ENCODE measurements at regions of chr22 and their contacts with region 1.

Region 1: GRCh38 chr22:30289134-30289979 is at the start of gene CASTOR1:
- DNase-seq: peak; percentile 81 to 90
- ATAC-seq: peak; percentile 80 to 83 (median 81)
- H3K4me3 ChIP-seq: peak within 1 kb of the TSS; percentile 68
- H3K4me3 Mint-ChIP-seq: peak within 1 kb of the TSS; percentile 92
- H3K27ac ChIP-seq: peak within 1 kb of the TSS; percentile 66
- H3K27ac Mint-ChIP-seq: peak within 1 kb of the TSS; percentile 86 to 88
- H3K4me1 ChIP-seq: peaks cover 43% of the 10 kb centered on the region
- H3K4me1 Mint-ChIP-seq: peaks cover 19 to 39% of the 10 kb centered on the region in 2 donors
- H3K27me3 ChIP-seq: no peaks in the 10 kb centered on the region
- H3K27me3 Mint-ChIP-seq: no peaks in the 10 kb centered on the region
- CTCF ChIP-seq: no peak
- total RNA-seq, gene CASTOR1: 7.0 to 11.9 (median 8.8) TPM

Region 2: DNA sequence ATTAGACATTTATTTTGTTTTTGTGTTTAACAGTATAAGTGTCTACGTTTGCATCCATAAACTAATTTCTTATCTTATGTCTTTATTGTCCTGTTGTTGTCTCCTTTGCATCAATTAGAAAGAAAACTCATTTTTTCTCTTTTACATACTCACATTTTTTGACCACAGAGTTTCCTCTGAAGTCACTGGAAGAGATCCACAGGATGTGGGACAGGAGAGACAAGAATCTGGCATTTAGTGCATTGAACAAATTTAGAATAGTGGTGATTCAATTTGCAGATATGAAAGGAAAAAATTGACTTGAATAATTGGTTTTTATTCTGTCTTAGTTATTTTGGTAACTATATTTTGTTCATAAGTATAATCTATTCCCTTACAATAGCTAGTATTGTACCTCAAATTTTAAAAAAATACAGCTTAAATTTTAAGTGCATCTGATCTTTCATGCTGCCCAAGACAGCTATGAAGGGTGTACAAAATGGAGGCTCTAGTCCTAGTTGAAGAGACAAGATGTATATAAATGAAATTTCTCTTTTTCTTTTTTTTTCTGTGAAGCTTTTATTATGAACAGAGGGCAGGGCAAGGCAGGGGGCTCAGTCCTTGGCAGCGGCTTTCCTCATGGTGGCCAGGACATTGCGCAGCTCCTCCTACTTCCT is 184.7 kb before region 1 on chr22:
- intact Hi-C with region 1: loop called (anchors 1 kb)
- DNase-seq: peak in 1 of 2 donors; percentile 44
- ATAC-seq: no peak
- H3K4me3 ChIP-seq: no peak overlapping the region
- H3K4me3 Mint-ChIP-seq: no peak overlapping the region
- H3K27ac ChIP-seq: no peak overlapping the region
- H3K27ac Mint-ChIP-seq: no peak overlapping the region
- H3K4me1 ChIP-seq: peaks cover 3% of the 10 kb centered on the region
- H3K4me1 Mint-ChIP-seq: peaks cover 0 to 5% of the 10 kb centered on the region in 2 donors
- H3K27me3 ChIP-seq: no peaks in the 10 kb centered on the region
- H3K27me3 Mint-ChIP-seq: peaks cover 0 to 6% of the 10 kb centered on the region in 2 donors
- CTCF ChIP-seq: no peak

Region 3: DNA sequence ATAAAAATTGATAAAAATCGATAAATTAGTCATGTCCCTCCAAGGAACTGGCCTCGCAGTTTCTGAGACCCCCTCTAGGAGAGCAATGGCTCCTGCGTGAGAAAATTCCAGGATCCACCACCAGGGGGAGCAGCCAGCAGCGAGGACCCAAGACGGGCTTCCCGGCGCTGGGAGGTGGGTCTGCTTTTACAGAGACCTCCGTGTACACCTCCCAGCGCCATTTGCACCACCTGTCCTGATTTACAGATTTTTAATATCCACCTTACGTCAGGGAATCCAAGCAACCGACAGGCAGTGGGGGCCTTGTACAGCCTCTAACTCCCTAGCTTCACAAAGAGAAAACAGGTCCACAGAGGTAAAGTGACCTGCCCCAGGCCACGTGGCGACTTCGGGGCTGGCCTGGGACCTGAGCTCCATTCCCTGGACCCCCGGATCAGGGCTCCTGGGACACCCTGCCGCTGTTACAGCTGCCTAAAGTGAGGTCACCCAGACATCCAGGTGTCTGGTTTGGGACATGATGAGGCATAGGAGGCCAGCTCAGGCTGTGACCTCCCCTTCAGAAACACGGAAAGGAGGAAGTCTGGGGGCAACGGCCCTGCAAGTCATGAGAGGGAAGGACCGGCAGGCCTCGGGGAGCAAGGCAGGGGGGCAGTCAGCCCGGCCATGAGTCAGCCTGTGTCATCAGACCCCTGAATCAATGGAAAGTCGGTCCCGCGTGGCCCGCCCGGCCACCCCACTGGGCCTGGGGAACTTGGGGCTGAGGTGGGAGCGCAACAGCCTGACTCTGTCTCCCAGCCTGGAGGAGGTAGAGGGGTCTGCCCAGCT is 26.2 kb before region 1 on chr22:
- intact Hi-C with region 1: loop called (anchors 1 kb)
- DNase-seq: peak; percentile 76 to 88
- ATAC-seq: no peak
- H3K4me3 ChIP-seq: no peak overlapping the region
- H3K4me3 Mint-ChIP-seq: peak overlapping the region; percentile 28
- H3K27ac ChIP-seq: no peak overlapping the region
- H3K27ac Mint-ChIP-seq: peak overlapping the region; percentile 34 to 84
- H3K4me1 ChIP-seq: peaks cover 61% of the 10 kb centered on the region
- H3K4me1 Mint-ChIP-seq: peaks cover 29 to 52% of the 10 kb centered on the region in 2 donors
- H3K27me3 ChIP-seq: no peaks in the 10 kb centered on the region
- H3K27me3 Mint-ChIP-seq: no peaks in the 10 kb centered on the region
- CTCF ChIP-seq: peak; percentile 100

Region 4: DNA sequence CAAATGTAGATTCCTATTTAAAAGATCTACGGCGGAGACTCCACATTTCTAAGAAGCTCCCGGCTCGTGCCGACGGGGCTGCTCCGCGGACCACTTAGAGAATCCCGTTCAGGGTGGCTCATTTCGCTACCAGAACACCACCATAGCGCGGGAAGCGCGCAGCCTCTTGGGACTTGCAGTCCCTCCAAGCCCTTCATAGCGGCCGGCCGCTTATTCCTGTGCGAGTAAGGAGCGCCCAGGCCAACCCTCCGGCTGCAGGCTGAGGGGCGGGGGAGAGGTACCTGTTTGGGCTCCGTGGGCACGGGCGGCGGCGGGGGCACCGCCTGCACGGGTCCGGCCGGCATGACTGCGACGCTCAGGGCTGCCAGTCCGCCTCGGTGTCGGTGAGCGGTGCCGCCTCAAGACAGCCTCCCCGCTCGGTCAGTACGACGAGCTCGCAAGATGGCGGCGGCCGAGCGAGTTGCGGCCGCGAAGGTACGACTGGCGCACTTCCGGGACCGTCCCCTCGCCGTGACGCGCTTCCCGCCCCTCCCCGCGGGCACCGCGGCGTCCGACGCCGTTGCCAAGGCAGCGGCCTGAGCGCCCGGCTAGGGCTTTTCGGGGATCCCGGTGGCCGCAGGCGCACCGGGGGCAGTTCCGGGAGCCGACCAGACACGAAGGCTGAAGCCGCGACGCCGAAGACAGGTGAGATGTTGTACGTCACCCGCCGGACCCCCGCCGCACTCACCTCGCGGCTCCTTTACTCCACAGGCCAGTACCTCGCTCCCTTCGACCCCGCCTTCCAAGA is 67.3 kb after region 1 on chr22 and contains the starts of genes CCDC157 and SF3A1:
- intact Hi-C with region 1: loop called (anchors 1 kb)
- DNase-seq: peak; percentile 89 to 95
- ATAC-seq: peak; percentile 84 to 94 (median 84)
- H3K4me3 ChIP-seq: peak within 1 kb of the TSS; percentile 96
- H3K4me3 Mint-ChIP-seq: peak within 1 kb of the TSS; percentile 97
- H3K27ac ChIP-seq: peak within 1 kb of the TSS; percentile 88
- H3K27ac Mint-ChIP-seq: peak within 1 kb of the TSS; percentile 89 to 92
- H3K4me1 ChIP-seq: peaks cover 50% of the 10 kb centered on the region
- H3K4me1 Mint-ChIP-seq: peaks cover 59% of the 10 kb centered on the region in 2 donors
- H3K27me3 ChIP-seq: no peaks in the 10 kb centered on the region
- H3K27me3 Mint-ChIP-seq: peaks cover 0 to 3% of the 10 kb centered on the region in 2 donors
- CTCF ChIP-seq: no peak
- total RNA-seq, gene CCDC157: 7.7 to 9.7 (median 8.4) TPM
- total RNA-seq, gene SF3A1: 309 to 340 (median 319) TPM

Region 5: DNA sequence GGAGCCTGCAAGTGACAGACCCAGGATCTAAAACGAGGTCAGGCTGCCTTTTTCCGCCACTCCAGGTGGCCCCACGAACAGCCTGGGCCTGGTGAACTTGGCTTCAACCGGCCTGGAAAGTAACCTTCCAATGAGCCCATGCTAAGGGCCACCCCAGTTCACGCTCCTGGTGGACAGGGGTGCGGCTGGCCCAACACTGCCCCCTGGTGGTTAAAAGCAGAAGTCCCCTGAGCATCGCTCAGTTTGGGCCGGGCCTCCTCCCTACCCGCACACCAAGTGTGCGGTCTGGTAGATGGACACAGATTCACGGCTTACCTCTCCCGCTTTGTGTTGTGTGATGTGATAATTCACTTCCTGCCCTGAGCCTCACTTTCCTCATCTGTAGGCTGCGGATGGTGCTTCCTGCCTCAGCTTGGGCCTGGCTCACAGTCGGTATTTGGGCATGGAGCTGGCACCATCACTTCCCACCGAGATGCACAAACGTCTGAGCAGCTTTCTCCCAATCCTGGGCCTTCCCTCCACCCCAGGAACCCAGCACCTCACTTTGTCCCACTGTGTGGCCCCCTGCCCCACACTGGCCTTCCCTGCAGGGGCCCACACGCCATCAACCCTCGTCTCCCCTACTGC is 196.1 kb after region 1 on chr22:
- intact Hi-C with region 1: loop called (anchors 1 kb)
- DNase-seq: peak; percentile 69 to 87
- ATAC-seq: peak; percentile 86 to 99 (median 99)
- H3K4me3 ChIP-seq: no peak overlapping the region
- H3K4me3 Mint-ChIP-seq: no peak overlapping the region
- H3K27ac ChIP-seq: no peak overlapping the region
- H3K27ac Mint-ChIP-seq: no peak overlapping the region
- H3K4me1 ChIP-seq: peaks cover 5% of the 10 kb centered on the region
- H3K4me1 Mint-ChIP-seq: peaks cover 0 to 5% of the 10 kb centered on the region in 2 donors
- H3K27me3 ChIP-seq: no peaks in the 10 kb centered on the region
- H3K27me3 Mint-ChIP-seq: peaks cover 3 to 5% of the 10 kb centered on the region in 2 donors
- CTCF ChIP-seq: peak; percentile 96

Region 6: GRCh38 chr22:30574997-30575671 is 285.8 kb after region 1 on chr22:
- intact Hi-C with region 1: no loop called
- DNase-seq: no peak
- ATAC-seq: no peak
- H3K4me3 ChIP-seq: no peak overlapping the region
- H3K4me3 Mint-ChIP-seq: no peak overlapping the region
- H3K27ac ChIP-seq: no peak overlapping the region
- H3K27ac Mint-ChIP-seq: no peak overlapping the region
- H3K4me1 ChIP-seq: no peaks in the 10 kb centered on the region
- H3K4me1 Mint-ChIP-seq: no peaks in the 10 kb centered on the region
- H3K27me3 ChIP-seq: peaks cover 4% of the 10 kb centered on the region
- H3K27me3 Mint-ChIP-seq: no peaks in the 10 kb centered on the region
- CTCF ChIP-seq: no peak